ENCODE measurements at regions of chr12 and their contacts with region 1.

Region 1: DNA sequence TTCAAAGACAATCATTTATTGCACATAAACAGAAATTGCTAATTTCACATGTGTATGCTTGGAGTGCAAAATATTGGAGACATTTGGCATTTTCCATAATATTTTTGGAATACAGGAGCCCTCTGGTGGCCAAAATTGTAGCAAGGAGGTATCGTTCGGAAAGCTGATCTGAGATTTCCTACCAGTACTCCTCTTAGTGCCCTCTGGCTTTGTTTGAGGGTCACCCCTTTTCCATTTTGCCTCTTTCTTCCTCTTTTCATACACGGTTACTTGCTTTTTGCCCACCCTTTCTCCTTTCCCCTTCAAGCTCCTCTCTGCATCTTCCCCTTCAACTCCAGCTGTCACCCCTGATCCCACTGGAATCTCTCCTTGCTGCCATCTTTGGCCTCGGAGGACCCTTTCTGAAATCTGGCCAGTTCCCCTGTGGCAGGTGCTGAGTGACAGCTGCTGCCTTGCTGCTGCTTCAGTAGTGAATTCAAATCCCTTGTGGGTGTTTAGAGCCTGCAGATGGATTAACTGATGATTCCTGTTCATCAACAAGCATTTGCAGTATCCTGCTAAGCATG is 164.6 kb upstream of the PARP11 start:
- DNase-seq: peak; percentile 44
- ATAC-seq: peak; percentile 35; the same call in 1 of the 3 replicates
- H3K4me3 ChIP-seq: no peak overlapping the region
- H3K27ac ChIP-seq: no peak overlapping the region
- H3K4me1 ChIP-seq: peaks cover 48% of the 10 kb centered on the region
- H3K27me3 ChIP-seq: no peaks in the 10 kb centered on the region
- CTCF ChIP-seq: peak; percentile 78
- EP300 ChIP-seq: no peak
- POLR2A ChIP-seq: no peak
- RAD21 ChIP-seq: peak; percentile 80

Region 2: DNA sequence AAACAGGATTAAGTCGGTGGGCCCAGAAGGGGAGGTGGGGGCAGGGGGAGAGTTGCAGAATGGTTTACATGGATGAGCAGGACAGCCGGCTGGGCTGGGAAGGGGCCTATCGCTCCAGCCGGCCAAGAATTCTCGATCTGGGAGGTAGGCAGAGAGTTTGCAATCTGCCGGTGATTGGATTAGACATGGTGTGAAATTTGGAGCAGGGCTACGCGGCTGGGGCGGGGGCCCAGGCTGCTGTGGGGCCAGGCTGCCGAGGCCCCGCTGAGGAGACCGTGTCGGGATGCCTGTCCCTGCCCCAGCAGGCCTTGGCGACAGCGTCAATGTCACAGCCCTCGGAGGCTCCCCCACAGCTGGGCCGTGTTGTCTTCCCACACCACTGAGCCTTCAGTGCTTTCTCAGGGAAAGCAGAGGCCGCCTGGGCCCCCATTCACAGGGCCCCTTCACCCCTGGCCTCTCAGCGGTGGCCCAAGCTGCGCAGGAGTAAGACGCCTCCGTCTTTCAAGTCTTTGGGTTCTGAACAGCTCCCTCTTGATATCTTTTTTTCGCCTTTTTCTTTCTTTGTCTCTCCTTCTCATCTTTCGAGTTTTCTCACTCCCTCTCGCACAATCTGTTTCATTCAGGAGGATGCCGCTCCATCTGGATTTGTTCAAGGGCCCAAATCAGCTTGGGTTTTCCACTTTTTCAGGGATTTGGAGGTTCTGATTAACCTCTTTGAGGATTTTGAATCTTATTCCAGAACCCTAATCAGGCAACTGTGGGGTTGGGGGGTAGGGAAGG is 47.1 kb before region 1 on chr12:
- CTCF ChIA-PET with region 1: interaction called, 85 read pairs
- POLR2A ChIA-PET with region 1: interaction called, 4 read pairs
- in situ Hi-C with region 1: loop called (anchors 5 kb)
- intact Hi-C with region 1: loop called (anchors 1 kb)
- DNase-seq: no peak
- ATAC-seq: no peak
- H3K4me3 ChIP-seq: no peak overlapping the region
- H3K27ac ChIP-seq: no peak overlapping the region
- H3K4me1 ChIP-seq: peaks cover 29% of the 10 kb centered on the region
- H3K27me3 ChIP-seq: no peaks in the 10 kb centered on the region; a peak in 1 of 5 replicates
- CTCF ChIP-seq: no peak
- EP300 ChIP-seq: no peak
- POLR2A ChIP-seq: no peak
- RAD21 ChIP-seq: no peak

Region 3: DNA sequence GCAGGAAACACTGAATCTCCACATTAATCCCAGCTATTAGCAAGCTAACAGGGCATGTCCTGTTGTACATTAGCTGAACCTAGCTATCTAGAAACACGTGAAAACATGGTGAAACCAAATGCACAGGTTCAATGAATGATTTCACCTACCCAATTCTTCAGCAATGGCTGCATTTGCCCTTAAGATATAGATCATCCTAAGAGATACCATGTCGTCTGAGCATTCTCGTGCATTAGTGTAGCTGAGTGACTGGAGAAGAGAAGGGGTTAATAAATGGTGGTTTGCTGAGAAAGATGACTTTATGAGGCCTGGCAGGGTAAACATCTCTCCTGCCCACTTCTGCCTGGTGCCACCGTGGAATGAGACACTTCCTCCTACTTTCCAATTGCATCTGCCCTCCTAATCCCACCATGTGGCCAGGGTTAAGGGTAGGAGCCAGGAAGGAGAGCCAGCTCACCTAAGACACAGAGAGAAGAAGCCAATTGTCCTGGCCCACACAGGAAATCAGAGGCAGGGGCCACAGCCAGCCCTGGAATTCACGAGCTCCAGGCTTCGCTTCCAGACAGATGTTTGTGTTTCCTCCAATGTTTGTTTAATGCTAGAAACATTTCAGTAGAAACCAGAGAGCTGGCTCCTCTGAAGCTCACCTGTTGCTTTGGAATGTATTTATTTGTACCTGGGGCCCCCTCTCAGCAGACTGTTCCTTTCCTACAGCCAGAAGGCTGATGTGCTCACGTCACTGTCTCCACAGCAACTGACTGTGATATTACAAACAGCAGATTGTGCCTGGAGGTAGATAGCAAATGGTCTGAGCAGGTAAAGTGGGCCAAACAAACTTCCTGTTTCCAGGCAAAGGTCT is 38.6 kb before region 1 on chr12:
- CTCF ChIA-PET with region 1: interaction called, 85 read pairs
- POLR2A ChIA-PET with region 1: interaction called, 16 read pairs
- in situ Hi-C with region 1: loop called (anchors 5 kb)
- intact Hi-C with region 1: loop called (anchors 1 kb)
- DNase-seq: peak; percentile 88
- ATAC-seq: peak; percentile 86
- H3K4me3 ChIP-seq: no peak overlapping the region; a peak in 1 of 6 replicates
- H3K27ac ChIP-seq: peak overlapping the region; percentile 89
- H3K4me1 ChIP-seq: peaks cover 52% of the 10 kb centered on the region
- H3K27me3 ChIP-seq: no peaks in the 10 kb centered on the region
- CTCF ChIP-seq: no peak
- EP300 ChIP-seq: peak; percentile 53 to 67; a peak in 2 of 4 replicates
- POLR2A ChIP-seq: 0 out of 4 replicates have a peak, but pooled peaks of 1 of the 2 experiments have one; percentile 27
- RAD21 ChIP-seq: no peak

Measured in HepG2 (cell line).